Caco-2 (cell line): ENCODE measurements at regions of chr3 and their contacts with region 1.

Region 1: DNA sequence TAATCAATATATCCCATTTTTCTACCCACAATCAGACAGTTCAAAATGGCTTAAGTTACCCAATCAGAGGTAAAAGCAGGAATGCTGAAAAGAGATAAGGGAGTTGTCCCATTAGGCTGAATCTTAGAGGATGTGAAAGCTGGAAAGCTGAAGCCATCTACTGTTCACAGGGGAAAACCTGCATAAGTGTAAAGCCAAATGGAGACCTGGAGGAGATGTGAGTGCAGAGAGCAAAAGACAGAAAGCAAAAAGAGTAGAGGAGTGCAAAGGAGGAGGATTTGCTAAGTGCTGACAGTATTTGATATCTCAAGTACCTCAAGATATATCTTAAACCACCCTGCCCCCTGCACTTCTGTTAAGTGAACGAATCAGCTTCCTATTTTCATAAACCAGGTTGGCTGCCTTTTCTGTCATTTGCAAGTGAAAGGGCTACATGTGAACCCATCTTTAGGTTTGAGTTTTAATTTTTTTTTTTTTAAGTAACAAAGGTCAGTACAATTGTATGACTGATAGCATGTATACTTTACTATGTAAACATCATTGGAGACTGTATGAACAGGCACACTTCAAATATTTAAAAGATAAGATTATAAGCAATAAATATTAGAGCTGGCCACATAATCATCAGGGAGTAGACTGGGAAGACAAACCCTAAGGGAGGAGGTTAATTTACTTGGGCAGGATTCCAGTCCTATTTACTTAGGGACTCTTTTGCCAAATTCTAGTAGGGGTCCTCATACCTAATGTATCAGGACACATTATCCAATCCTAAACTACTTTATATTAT is 22.8 kb upstream of the P2RY1 start:
- DNase-seq: peak; percentile 49
- H3K4me3 ChIP-seq: no peak overlapping the region
- H3K4me3 Mint-ChIP-seq: peak overlapping the region; percentile 5
- H3K27ac Mint-ChIP-seq: no peak overlapping the region
- H3K4me1 ChIP-seq: peaks cover 24% of the 10 kb centered on the region
- H3K4me1 Mint-ChIP-seq: peaks cover 13% of the 10 kb centered on the region
- H3K27me3 ChIP-seq: no peaks in the 10 kb centered on the region
- H3K27me3 Mint-ChIP-seq: no peaks in the 10 kb centered on the region
- CTCF ChIP-seq: no peak

Region 2: DNA sequence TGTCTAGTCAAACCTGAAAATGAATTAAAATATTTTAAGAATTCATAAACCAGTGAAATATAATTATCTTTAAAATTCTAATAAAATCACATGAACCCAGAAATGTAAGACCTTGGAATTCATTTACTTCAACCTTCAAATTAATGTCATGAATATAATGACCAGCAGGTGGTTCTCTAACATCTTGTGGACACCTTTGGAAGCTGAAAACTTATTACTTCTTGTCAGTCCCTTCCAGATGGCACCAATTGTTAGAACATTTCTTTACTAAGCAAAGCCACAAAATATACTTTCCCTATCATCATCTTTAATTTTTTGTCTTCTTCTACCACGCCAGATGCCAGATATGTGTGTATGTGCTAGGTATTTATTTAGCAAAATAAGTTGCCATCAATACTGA is 303.5 kb before region 1 on chr3:
- CTCF ChIA-PET with region 1: interaction called, 3 read pairs
- POLR2A ChIA-PET with region 1: no interaction called
- intact Hi-C with region 1: loop called (anchors 10 kb)
- DNase-seq: peak in 1 of 2 experiments; percentile 24
- H3K4me3 ChIP-seq: no peak overlapping the region
- H3K4me3 Mint-ChIP-seq: no peak overlapping the region
- H3K27ac Mint-ChIP-seq: no peak overlapping the region
- H3K4me1 ChIP-seq: no peaks in the 10 kb centered on the region
- H3K4me1 Mint-ChIP-seq: no peaks in the 10 kb centered on the region
- H3K27me3 ChIP-seq: no peaks in the 10 kb centered on the region
- H3K27me3 Mint-ChIP-seq: no peaks in the 10 kb centered on the region
- CTCF ChIP-seq: peak; percentile 22 to 43

Region 3: DNA sequence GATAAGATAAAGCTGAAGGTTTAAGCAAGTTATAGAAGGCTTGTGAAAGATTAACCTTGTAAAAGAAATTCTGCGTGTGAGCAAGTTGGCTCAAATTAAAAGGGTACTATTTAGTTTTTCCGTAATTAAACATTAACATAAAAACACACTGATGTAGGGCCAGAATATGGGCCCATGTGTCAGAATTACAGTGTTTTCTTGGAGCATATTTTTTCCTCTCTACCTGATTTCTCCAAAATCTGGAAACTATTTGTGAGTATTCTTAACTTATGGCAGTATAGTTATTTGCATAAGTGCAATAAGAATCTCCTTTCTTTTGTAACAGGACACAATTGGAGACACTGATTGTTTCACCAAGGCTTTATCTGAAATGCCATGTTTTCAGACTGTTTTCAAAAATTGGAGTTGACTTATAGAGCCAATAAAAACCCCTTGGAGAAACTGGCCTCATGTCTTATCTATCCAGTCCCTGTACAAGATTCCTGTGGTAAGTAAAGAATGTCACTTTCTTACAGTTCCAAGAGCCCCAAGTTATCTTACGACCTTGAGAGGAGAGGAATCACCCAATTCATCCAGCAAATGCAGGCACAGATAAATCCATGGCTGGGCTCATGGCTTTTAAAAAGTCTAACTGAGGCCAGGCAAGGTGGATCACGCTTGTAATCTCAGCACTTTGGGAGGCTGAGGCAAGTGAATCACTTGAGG is 25.0 kb before region 1 on chr3:
- CTCF ChIA-PET with region 1: no interaction called
- POLR2A ChIA-PET with region 1: no interaction called
- intact Hi-C with region 1: loop called (anchors 1 kb)
- DNase-seq: peak; percentile 35 to 55
- H3K4me3 ChIP-seq: no peak overlapping the region
- H3K4me3 Mint-ChIP-seq: no peak overlapping the region
- H3K27ac Mint-ChIP-seq: peak overlapping the region; percentile 64
- H3K4me1 ChIP-seq: peaks cover 29% of the 10 kb centered on the region
- H3K4me1 Mint-ChIP-seq: peaks cover 11% of the 10 kb centered on the region
- H3K27me3 ChIP-seq: no peaks in the 10 kb centered on the region
- H3K27me3 Mint-ChIP-seq: no peaks in the 10 kb centered on the region
- CTCF ChIP-seq: no peak

Region 4: DNA sequence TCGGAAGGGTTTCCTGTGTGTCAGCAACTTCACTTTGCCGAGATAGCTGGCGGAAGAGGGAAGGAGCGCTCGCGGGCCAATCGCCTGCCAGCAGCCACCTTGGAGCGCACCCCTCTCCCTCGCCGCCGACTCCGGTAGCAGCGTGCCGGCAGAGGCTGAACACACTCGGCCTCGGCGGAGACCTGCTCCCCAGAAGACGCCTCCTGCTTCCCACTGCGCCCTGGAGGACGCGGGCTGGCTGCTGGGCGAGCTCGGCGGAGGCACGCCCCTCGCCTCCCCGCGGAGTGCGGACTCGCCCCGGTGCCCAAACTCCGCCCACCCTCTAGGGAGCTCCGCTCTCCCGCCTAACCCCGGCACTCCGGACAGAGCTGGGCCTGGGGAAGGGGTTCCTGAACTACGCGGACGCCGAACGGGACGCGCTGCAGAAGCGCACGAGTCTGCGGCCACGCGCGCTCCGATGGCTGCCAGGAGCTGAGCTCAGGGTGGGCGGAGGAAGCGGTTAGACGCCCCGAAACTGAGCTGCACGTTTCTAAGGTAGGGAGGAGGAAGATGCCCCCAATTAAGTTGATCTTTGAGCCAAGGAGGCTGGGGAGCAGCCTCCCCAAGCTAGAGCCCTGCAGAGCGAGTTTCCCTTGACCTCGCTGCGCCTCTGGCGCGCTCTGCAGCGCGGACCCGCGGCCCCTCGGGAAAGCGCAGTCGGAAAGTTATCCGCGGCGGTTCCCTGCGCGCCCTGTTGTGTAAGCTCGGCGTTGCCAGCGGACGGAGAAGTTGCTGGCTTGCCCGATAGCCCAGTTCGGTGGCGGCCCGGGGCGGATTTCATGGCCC is 22.8 kb after region 1 on chr3 and contains the start of gene P2RY1:
- CTCF ChIA-PET with region 1: no interaction called
- POLR2A ChIA-PET with region 1: interaction called, 5 read pairs
- intact Hi-C with region 1: loop called (anchors 1 kb)
- DNase-seq: peak; percentile 85 to 86
- H3K4me3 ChIP-seq: peak within 1 kb of the TSS; percentile 70
- H3K4me3 Mint-ChIP-seq: peak within 1 kb of the TSS; percentile 88
- H3K27ac Mint-ChIP-seq: peak within 1 kb of the TSS; percentile 84
- H3K4me1 ChIP-seq: no peaks in the 10 kb centered on the region
- H3K4me1 Mint-ChIP-seq: no peaks in the 10 kb centered on the region
- H3K27me3 ChIP-seq: no peaks in the 10 kb centered on the region
- H3K27me3 Mint-ChIP-seq: no peaks in the 10 kb centered on the region
- CTCF ChIP-seq: peak in 1 of 2 experiments; percentile 44
- total RNA-seq, gene P2RY1: 6.0 and 8.5 TPM in 2 replicates

Region 5: DNA sequence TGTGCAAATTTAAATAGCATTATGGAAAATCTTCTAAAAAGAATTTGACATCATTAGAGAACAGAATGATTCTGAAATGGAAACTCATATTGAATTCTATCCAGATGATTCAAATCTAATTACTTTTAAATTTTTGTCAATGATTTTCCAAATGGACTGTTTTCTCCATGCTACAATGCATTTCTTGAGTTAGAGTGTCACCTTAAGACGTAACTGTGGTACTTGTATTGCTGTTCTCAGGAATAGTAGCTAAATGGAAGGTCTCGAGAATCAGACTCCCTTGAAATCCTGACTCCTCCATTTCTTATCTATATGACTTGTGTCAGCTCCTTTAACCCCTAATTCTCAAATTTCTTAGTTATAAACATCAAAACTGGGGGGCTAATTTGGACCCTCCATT is 125.1 kb after region 1 on chr3:
- CTCF ChIA-PET with region 1: interaction called, 3 read pairs
- POLR2A ChIA-PET with region 1: no interaction called
- intact Hi-C with region 1: loop called (anchors 1 kb)
- DNase-seq: no peak
- H3K4me3 ChIP-seq: no peak overlapping the region
- H3K4me3 Mint-ChIP-seq: no peak overlapping the region
- H3K27ac Mint-ChIP-seq: no peak overlapping the region
- H3K4me1 ChIP-seq: peaks cover 8% of the 10 kb centered on the region; the same call in 1 of the 2 replicates
- H3K4me1 Mint-ChIP-seq: peaks cover 14% of the 10 kb centered on the region
- H3K27me3 ChIP-seq: no peaks in the 10 kb centered on the region
- H3K27me3 Mint-ChIP-seq: no peaks in the 10 kb centered on the region
- CTCF ChIP-seq: peak in 1 of 2 experiments; percentile 15